ENCODE measurements at regions of chr16 and their contacts with region 1.

Region 1: GRCh38 chr16:23803591-23804123 is 32.1 kb upstream of the PRKCB start:
- DNase-seq: peak; percentile 77
- H3K4me3 Mint-ChIP-seq: no peak overlapping the region
- H3K27ac Mint-ChIP-seq: no peak overlapping the region
- H3K4me1 Mint-ChIP-seq: peaks cover 14% of the 10 kb centered on the region
- H3K27me3 Mint-ChIP-seq: peaks cover 13% of the 10 kb centered on the region

Region 2: GRCh38 chr16:23835390-23836077 is 31.9 kb after region 1 on chr16 and contains the start of gene PRKCB:
- CTCF ChIA-PET with region 1: interaction called, 10 read pairs
- POLR2A ChIA-PET with region 1: interaction called, 7 read pairs
- DNase-seq: peak; percentile 92
- H3K4me3 Mint-ChIP-seq: peak within 1 kb of the TSS; percentile 93
- H3K27ac Mint-ChIP-seq: peak within 1 kb of the TSS; percentile 80
- H3K4me1 Mint-ChIP-seq: peaks cover 61% of the 10 kb centered on the region
- H3K27me3 Mint-ChIP-seq: peaks cover 4% of the 10 kb centered on the region
- total RNA-seq, gene PRKCB: 77.3 to 81.4 TPM

Region 3: DNA sequence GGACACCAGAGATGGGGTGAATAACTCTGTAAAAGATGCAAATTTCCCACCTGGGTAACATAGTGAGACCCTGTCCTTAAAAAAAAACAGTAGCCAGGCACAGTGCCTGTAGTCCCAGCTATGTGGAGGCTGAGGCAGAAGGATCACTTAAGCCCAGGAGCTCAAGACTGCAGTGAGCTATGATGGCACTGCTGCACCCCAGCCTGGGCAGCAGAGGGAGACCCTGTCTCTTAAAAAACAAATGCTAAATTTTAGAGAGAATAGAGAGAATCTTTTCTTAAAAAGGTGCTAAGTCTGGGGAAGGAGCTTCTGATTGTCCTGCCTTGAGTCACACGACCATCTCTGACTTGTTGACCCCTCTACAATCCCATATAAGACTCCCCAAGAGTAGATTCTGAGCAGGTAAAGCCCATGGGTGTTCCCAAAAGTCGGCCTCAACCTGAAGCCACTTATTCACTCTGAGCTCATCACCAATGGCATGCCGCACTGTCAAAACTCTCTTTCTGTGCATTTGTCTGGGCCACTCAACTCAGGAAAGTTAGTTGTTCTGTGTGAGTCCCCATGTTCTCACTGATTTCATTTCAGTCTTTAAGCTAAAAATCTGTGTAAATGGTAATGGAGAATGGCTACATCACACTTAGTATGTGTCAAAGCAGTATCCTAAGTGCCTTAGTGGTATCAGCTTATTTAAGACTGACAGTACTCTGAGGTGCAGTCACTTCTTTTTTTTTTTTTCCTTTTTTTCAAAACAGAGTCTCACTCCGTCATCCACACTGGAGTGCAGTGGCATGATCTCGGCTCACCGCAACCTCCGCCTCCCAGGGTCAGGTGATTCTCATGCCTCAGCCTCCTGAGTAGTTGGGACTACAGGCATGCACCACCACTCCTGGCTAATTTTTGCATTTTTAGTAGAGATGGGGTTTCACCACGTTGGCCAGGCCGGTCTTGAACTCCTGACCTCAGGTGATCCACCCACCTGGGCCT is 73.7 kb after region 1 on chr16:
- CTCF ChIA-PET with region 1: interaction called, 18 read pairs
- POLR2A ChIA-PET with region 1: no interaction called
- DNase-seq: no peak
- H3K4me3 Mint-ChIP-seq: no peak overlapping the region
- H3K27ac Mint-ChIP-seq: no peak overlapping the region
- H3K4me1 Mint-ChIP-seq: peaks cover 60% of the 10 kb centered on the region
- H3K27me3 Mint-ChIP-seq: no peaks in the 10 kb centered on the region

Region 4: GRCh38 chr16:24010440-24011089 is 206.9 kb after region 1 on chr16:
- CTCF ChIA-PET with region 1: interaction called, 276 read pairs
- POLR2A ChIA-PET with region 1: interaction called, 11 read pairs
- DNase-seq: peak; percentile 83
- H3K4me3 Mint-ChIP-seq: no peak overlapping the region
- H3K27ac Mint-ChIP-seq: no peak overlapping the region
- H3K4me1 Mint-ChIP-seq: peaks cover 41% of the 10 kb centered on the region
- H3K27me3 Mint-ChIP-seq: no peaks in the 10 kb centered on the region

Region 5: GRCh38 chr16:24036614-24037013 is 233.0 kb after region 1 on chr16:
- CTCF ChIA-PET with region 1: interaction called, 90 read pairs
- POLR2A ChIA-PET with region 1: interaction called, 8 read pairs
- DNase-seq: peak; percentile 26
- H3K4me3 Mint-ChIP-seq: no peak overlapping the region
- H3K27ac Mint-ChIP-seq: no peak overlapping the region
- H3K4me1 Mint-ChIP-seq: peaks cover 50% of the 10 kb centered on the region
- H3K27me3 Mint-ChIP-seq: no peaks in the 10 kb centered on the region

Region 6: GRCh38 chr16:24041826-24042631 is 238.4 kb after region 1 on chr16:
- CTCF ChIA-PET with region 1: interaction called, 90 read pairs
- POLR2A ChIA-PET with region 1: no interaction called
- DNase-seq: peak; percentile 82
- H3K4me3 Mint-ChIP-seq: no peak overlapping the region
- H3K27ac Mint-ChIP-seq: no peak overlapping the region
- H3K4me1 Mint-ChIP-seq: peaks cover 7% of the 10 kb centered on the region
- H3K27me3 Mint-ChIP-seq: no peaks in the 10 kb centered on the region

Region 7: DNA sequence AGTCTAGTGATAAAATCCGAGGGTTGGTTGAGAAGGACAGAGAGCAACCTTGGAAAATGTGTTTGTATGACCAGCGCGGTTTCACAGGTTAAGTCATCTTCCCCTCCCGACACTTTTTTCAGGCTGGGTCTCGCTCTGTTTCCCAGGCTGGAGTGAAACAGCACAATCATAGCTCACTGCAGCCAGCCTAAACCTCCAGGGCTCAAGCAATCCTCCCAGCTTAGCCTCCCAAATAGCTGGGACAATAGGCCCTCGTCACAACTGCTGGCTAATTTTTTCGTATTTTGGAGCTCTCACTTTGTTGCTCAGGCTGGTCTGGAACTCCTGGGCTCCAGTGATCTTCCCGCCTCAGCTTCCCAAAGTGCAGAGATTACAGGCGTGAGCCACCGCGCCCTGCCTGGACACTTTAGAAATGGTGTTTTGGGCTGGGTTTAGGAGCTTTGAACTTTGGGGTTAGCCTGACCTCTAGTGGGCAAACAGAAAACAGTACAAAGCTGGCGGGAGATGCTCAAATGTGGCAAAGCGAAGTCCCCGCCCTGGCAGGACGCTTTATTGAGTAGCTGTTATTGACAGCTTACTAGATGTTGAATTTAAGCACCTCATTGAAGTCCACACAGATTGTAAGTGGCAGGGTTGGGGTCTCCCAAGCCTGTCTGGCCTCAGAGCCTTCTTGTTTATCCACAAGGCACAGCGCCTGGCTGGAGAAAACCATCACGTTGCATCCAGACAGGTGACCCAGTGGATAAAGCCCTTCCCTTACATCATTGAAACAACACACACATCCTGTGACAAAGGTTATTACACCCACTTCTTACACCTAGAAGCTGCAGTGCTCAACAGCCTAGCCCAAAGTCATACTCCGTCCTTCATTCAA is 701.1 kb after region 1 on chr16:
- CTCF ChIA-PET with region 1: interaction called, 14 read pairs
- POLR2A ChIA-PET with region 1: no interaction called
- DNase-seq: peak; percentile 64
- H3K4me3 Mint-ChIP-seq: no peak overlapping the region
- H3K27ac Mint-ChIP-seq: no peak overlapping the region
- H3K4me1 Mint-ChIP-seq: peaks cover 4% of the 10 kb centered on the region
- H3K27me3 Mint-ChIP-seq: peaks cover 7% of the 10 kb centered on the region